PC-9 (cell line): ENCODE measurements at regions of chrX and their contacts with region 1.

Region 1: GRCh38 chrX:74133156-74133796 is 170.7 kb upstream of the ZCCHC13 start:
- DNase-seq: peak; percentile 11 to 61
- H3K4me3 ChIP-seq: no peak overlapping the region
- H3K27ac ChIP-seq: no peak overlapping the region
- H3K4me1 ChIP-seq: peaks cover 5% of the 10 kb centered on the region
- H3K27me3 ChIP-seq: no peaks in the 10 kb centered on the region
- CTCF ChIP-seq: peak; percentile 81

Region 2: GRCh38 chrX:73855546-73855945 is 277.7 kb before region 1 on chrX:
- CTCF ChIA-PET with region 1: no interaction called
- POLR2A ChIA-PET with region 1: no interaction called
- intact Hi-C with region 1: loop called (anchors 1 kb)
- DNase-seq: peak; percentile 40 to 58
- H3K4me3 ChIP-seq: no peak overlapping the region
- H3K27ac ChIP-seq: no peak overlapping the region
- H3K4me1 ChIP-seq: 0 out of 2 replicates have a peak, but pooled peaks cover 4% of the 10 kb centered on the region
- H3K27me3 ChIP-seq: no peaks in the 10 kb centered on the region
- CTCF ChIP-seq: peak; percentile 77

Region 3: DNA sequence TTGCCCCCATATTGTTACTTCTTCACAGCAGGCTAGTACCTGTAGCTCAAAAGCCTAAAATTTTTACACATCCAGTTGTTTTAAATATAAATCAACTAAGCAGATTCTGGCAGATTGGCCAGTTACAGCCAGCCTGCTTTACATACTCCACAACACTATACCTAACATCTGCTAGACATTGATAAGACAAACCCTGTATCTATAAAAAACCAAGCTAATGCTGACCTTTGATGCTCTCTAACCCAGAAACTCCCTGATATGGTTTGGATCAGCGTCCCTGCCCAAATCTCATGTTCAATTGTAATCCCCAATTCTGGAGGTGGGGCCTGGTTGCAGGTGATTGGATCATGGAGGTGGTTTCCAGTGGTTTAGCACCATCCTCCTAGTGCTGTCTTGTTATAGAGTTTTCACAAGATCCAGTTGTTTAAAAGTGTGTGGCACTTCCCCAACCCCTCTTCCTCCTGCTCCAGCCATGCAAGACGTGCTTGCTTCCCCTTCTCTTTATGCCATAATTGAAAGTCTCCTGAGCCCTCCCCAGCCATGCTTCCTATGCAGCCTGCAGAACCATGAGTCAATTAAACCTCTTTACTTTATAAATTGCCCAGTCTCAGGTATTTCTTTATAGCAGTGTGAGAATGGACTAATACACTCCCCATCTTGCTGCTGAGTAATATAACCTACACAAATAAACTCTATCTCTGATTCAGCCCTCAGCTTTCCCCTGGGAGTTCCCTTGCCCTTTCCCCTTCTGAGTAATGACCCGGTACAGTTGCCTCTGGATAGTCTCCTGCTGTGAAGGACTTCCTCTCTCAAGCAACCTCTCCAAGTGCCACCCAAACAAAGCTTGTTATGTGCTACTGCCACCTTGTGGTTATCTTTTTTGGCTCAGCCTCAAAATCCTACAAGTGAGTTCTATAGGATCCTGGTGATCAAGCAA is 210.3 kb after region 1 on chrX:
- CTCF ChIA-PET with region 1: no interaction called
- POLR2A ChIA-PET with region 1: no interaction called
- intact Hi-C with region 1: loop called (anchors 2 kb)
- DNase-seq: peak; percentile 62 to 94
- H3K4me3 ChIP-seq: no peak overlapping the region
- H3K27ac ChIP-seq: peak overlapping the region; percentile 60
- H3K4me1 ChIP-seq: peaks cover 10% of the 10 kb centered on the region
- H3K27me3 ChIP-seq: no peaks in the 10 kb centered on the region
- CTCF ChIP-seq: peak; percentile 80

Region 4: GRCh38 chrX:74369666-74370065 is 236.4 kb after region 1 on chrX:
- CTCF ChIA-PET with region 1: no interaction called
- POLR2A ChIA-PET with region 1: no interaction called
- intact Hi-C with region 1: no loop called
- DNase-seq: no peak
- H3K4me3 ChIP-seq: no peak overlapping the region
- H3K27ac ChIP-seq: no peak overlapping the region
- H3K4me1 ChIP-seq: no peaks in the 10 kb centered on the region
- H3K27me3 ChIP-seq: no peaks in the 10 kb centered on the region
- CTCF ChIP-seq: no peak

Region 5: DNA sequence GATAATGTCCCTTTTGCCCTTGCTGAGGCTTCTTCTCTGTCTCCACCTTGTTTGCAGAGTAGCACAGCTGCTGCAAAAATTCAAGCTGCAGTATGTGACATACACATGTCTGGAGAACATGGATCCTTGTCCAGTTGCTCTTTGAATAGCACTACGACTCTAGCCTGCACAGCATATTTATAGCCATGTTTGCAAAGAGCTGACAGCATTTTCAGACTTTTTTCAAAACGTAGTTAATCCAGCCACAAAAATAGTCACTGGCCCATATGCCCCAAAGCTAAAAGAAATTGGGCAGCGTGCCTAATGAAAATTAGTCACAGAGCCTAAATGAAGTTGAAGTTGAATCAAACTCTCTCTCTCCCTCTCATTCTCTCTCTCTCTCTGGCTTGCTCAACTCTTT is 305.5 kb after region 1 on chrX:
- CTCF ChIA-PET with region 1: interaction called, 12 read pairs
- POLR2A ChIA-PET with region 1: no interaction called
- intact Hi-C with region 1: no loop called
- DNase-seq: no peak
- H3K4me3 ChIP-seq: no peak overlapping the region
- H3K27ac ChIP-seq: no peak overlapping the region
- H3K4me1 ChIP-seq: peaks cover 20% of the 10 kb centered on the region
- H3K27me3 ChIP-seq: no peaks in the 10 kb centered on the region
- CTCF ChIP-seq: no peak